GM13976 (cell line): ENCODE measurements at regions of chr20 and their contacts with region 1.

Region 1: GRCh38 chr20:44187051-44187762 is at the start of gene JPH2:
- DNase-seq: no peak
- CTCF ChIP-seq: no peak

Region 2: GRCh38 chr20:44109951-44110361 is 77.3 kb before region 1 on chr20:
- in situ Hi-C with region 1: loop called (anchors 10 kb)
- DNase-seq: no peak
- CTCF ChIP-seq: no peak